MCF 10A (cell line): ENCODE measurements at regions of chr4 and their contacts with region 1.

Region 1: DNA sequence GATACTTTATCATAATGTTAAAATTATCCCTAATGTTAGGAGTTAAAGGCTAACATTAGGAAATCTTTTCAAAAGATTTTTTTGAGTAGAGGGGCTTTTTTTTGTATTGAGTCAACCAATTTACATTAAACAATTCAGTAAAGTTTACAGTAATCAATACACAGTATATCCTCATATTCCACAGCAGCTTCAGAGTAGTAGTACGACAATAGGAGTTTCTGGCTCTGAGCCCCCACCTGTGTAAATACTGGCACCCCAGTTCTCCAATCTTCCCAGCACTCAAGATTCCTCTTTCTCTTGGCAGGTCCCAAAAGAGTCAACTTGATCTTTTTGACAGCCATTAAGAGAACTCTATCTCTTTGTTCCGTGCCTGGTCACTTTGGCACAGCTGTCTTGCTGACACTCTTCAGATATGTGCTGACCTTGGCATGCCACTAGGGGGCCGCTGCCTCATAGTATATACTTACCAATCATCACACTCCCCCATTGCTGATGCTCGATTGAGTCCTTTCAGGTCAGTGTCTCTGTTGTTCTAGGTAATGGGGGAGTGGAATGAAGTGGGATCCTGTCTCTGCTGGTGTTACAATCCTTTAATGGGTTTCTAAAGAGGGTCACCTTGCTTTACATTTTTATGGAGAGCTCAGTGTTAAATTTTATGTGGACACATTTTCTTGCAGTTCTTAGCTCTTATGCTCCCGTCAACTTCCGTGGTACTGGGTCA is 19.5 kb upstream of the CCNI start:
- DNase-seq: peak; percentile 70
- H3K4me3 Mint-ChIP-seq: no peak overlapping the region
- H3K27ac Mint-ChIP-seq: peak overlapping the region; percentile 16
- H3K4me1 Mint-ChIP-seq: peaks cover 24% of the 10 kb centered on the region
- H3K27me3 Mint-ChIP-seq: no peaks in the 10 kb centered on the region
- CTCF ChIP-seq: peak; percentile 58

Region 2: DNA sequence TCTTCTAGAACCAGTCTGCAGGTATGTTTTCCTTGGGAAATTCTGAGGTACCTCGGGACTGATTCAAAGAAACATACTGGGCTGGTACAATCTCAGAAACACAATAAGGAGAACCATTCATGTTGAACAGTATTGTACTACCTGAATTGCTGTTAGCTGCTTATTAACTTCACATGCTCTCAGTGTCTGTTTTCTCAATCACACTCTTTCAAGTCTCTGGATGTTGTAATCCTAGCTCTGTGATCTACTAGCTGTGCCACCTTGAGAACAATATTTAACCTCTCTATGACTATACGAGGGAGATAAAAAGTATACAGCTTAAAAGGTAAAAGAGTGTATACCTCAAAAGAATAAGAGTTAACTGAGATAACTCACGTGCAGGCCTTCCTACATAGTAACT is 684.6 kb before region 1 on chr4:
- CTCF ChIA-PET with region 1: no interaction called
- POLR2A ChIA-PET with region 1: no interaction called
- intact Hi-C with region 1: no loop called
- DNase-seq: no peak
- H3K4me3 Mint-ChIP-seq: no peak overlapping the region
- H3K27ac Mint-ChIP-seq: no peak overlapping the region
- H3K4me1 Mint-ChIP-seq: peaks cover 6% of the 10 kb centered on the region
- H3K27me3 Mint-ChIP-seq: no peaks in the 10 kb centered on the region
- CTCF ChIP-seq: no peak

Region 3: DNA sequence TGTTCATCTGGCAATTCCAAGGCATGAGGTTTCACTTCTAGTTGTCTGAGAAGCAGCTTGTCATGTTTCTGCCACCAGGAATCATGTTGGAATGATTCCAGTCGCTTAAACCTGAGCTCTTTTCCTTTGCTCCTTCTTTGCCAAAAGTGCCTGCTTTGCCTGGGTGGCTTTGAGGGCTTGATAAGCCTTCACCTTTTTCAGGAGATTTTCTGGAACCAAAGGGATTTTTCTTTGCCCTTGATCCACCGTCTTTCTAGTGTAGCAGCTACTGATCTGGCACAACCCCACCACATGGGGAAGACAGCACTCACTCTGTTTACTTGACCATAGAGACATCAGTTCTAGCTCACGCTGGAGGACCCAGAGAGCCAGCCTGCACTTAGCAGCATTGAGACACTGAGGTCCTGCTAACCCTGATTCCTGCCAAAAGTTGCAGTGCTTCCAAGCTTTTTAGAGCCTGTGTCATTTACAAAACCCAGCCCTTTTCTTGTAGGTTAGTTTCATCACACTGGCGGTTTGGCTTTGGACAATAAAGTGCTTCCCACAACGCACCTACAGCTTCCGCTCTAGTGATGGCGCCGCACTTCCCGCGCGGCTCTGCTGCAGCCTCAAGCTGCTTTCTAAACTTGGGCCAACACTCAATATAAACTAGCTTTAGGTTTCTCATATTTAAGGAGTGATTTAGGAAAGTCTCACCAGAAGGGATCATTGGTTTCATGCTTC is 12.2 kb before region 1 on chr4:
- CTCF ChIA-PET with region 1: interaction called, 16 read pairs
- POLR2A ChIA-PET with region 1: interaction called, 17 read pairs
- intact Hi-C with region 1: no loop called
- DNase-seq: no peak
- H3K4me3 Mint-ChIP-seq: no peak overlapping the region
- H3K27ac Mint-ChIP-seq: no peak overlapping the region
- H3K4me1 Mint-ChIP-seq: peaks cover 9% of the 10 kb centered on the region
- H3K27me3 Mint-ChIP-seq: no peaks in the 10 kb centered on the region
- CTCF ChIP-seq: no peak

Region 4: DNA sequence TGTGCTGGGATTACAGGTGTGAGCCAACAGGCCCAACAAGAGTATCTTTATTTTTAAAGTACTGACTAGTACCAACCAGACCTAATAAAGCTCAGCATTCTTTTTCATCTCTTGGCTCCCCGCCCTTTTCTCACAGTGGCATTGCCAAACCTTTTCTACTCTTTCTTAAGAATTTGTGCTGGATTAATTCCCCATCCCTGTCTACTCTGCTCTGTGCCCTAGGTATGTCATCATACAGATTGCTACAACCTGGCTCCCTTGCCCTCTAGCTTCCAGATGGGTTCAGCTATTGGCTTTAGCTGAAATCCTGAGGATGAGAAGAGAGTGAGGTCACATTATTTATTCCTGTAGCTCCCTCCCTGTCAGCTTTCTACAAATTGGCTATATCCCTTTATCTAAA is 15.5 kb after region 1 on chr4:
- CTCF ChIA-PET with region 1: interaction called, 45 read pairs
- POLR2A ChIA-PET with region 1: interaction called, 4 read pairs
- intact Hi-C with region 1: no loop called
- DNase-seq: peak; percentile 55
- H3K4me3 Mint-ChIP-seq: no peak overlapping the region
- H3K27ac Mint-ChIP-seq: no peak overlapping the region
- H3K4me1 Mint-ChIP-seq: peaks cover 10% of the 10 kb centered on the region
- H3K27me3 Mint-ChIP-seq: no peaks in the 10 kb centered on the region
- CTCF ChIP-seq: no peak

Region 5: GRCh38 chr4:77146186-77147078 is 51.2 kb after region 1 on chr4:
- CTCF ChIA-PET with region 1: interaction called, 11 read pairs
- POLR2A ChIA-PET with region 1: interaction called, 248 read pairs
- intact Hi-C with region 1: no loop called
- DNase-seq: peak; percentile 48
- H3K4me3 Mint-ChIP-seq: peak overlapping the region; percentile 44
- H3K27ac Mint-ChIP-seq: peak overlapping the region; percentile 68
- H3K4me1 Mint-ChIP-seq: peaks cover 26% of the 10 kb centered on the region
- H3K27me3 Mint-ChIP-seq: no peaks in the 10 kb centered on the region
- CTCF ChIP-seq: no peak